Endothelial cell of umbilical vein (primary cell): ENCODE measurements at regions of chr5 and their contacts with region 1.

Region 1: DNA sequence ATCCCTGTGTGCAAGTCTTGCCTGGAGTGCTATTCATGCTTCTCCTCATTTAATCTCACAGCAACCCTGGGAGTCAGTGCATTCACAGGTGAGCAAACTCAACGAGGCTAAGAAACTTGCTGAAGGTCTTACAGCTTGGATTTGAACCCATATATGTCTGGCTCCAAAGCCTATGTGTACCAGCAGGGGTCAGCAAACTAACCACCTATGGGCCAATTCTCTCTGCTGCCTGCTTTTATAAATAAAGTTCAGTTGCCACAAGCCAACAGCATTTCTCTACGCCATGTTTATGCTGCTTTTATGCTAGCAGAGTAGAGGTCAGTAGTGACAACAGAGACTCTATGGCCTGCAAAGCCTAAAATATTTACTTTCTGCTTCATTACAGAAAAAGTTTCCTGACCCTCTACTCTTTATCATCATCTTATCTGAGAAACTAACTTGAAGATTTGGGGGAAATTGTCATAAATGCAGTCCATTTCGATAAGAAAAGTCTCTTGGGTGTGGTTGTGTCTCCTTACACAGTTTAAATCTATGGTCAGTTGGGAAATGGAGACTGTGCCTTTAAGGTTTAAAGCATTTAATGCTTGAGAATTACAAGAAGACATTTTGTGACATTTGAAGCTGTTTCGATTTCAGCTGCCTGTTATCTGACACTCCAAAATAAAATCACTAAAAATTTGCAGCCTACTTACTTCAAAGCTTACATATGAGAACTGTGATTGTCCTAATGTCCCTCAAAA is 137.7 kb downstream of the PRELID2 start:
- DNase-seq: peak; percentile 68
- H3K4me3 ChIP-seq: no peak overlapping the region
- H3K27ac ChIP-seq: no peak overlapping the region
- H3K4me1 ChIP-seq: no peaks in the 10 kb centered on the region
- H3K27me3 ChIP-seq: no peaks in the 10 kb centered on the region
- CTCF ChIP-seq: peak; percentile 61 to 74
- POLR2A ChIP-seq: no peak

Region 2: GRCh38 chr5:145681686-145682085 is 15.7 kb before region 1 on chr5:
- CTCF ChIA-PET with region 1: interaction called, 22 read pairs
- POLR2A ChIA-PET with region 1: no interaction called
- dilution Hi-C with region 1: no loop called
- intact Hi-C with region 1: no loop called
- DNase-seq: peak; percentile 75
- H3K4me3 ChIP-seq: no peak overlapping the region
- H3K27ac ChIP-seq: no peak overlapping the region
- H3K4me1 ChIP-seq: no peaks in the 10 kb centered on the region
- H3K27me3 ChIP-seq: no peaks in the 10 kb centered on the region
- CTCF ChIP-seq: peak; percentile 78 to 86
- POLR2A ChIP-seq: no peak

Region 3: DNA sequence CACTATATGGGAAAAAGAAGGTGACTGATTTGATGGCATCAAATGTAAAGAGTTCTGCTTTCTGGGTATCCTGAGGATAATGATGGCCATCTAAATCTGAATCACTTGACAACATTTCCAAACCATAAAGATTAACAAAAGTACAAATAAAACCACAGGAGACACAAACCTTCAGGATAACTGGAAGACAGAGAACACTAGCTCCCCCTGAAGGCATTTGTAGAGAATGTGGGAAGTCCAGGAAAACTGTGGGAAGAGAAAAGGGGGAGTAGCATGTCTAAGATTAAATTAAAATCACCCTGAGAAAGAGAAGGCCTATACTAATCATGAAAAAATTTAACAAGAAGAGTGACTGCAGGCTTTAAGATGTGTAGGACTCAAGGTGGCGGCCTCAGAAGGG is 21.5 kb after region 1 on chr5:
- CTCF ChIA-PET with region 1: interaction called, 14 read pairs
- POLR2A ChIA-PET with region 1: no interaction called
- dilution Hi-C with region 1: no loop called
- intact Hi-C with region 1: no loop called
- DNase-seq: peak; percentile 24
- H3K4me3 ChIP-seq: no peak overlapping the region
- H3K27ac ChIP-seq: no peak overlapping the region
- H3K4me1 ChIP-seq: no peaks in the 10 kb centered on the region
- H3K27me3 ChIP-seq: no peaks in the 10 kb centered on the region
- CTCF ChIP-seq: peak; percentile 22 to 36
- POLR2A ChIP-seq: no peak

Region 4: GRCh38 chr5:146049014-146049703 is 351.7 kb after region 1 on chr5:
- CTCF ChIA-PET with region 1: interaction called, 25 read pairs
- POLR2A ChIA-PET with region 1: no interaction called
- dilution Hi-C with region 1: no loop called
- intact Hi-C with region 1: loop called (anchors 1 kb)
- DNase-seq: peak; percentile 74
- H3K4me3 ChIP-seq: no peak overlapping the region
- H3K27ac ChIP-seq: no peak overlapping the region
- H3K4me1 ChIP-seq: no peaks in the 10 kb centered on the region
- H3K27me3 ChIP-seq: peaks cover 0 to 7% of the 10 kb centered on the region in 2 experiments
- CTCF ChIP-seq: peak; percentile 75
- POLR2A ChIP-seq: no peak

Region 5: GRCh38 chr5:146426853-146427618 is 729.6 kb after region 1 on chr5:
- CTCF ChIA-PET with region 1: no interaction called
- POLR2A ChIA-PET with region 1: no interaction called
- dilution Hi-C with region 1: no loop called
- intact Hi-C with region 1: loop called (anchors 10 kb)
- DNase-seq: peak; percentile 44
- H3K4me3 ChIP-seq: no peak overlapping the region
- H3K27ac ChIP-seq: no peak overlapping the region
- H3K4me1 ChIP-seq: no peaks in the 10 kb centered on the region
- H3K27me3 ChIP-seq: peaks cover 8 to 10% of the 10 kb centered on the region in 2 experiments
- CTCF ChIP-seq: peak; percentile 37 to 45
- POLR2A ChIP-seq: no peak